PC-9 (cell line): ENCODE measurements at regions of chr12 and their contacts with region 1.

Region 1: DNA sequence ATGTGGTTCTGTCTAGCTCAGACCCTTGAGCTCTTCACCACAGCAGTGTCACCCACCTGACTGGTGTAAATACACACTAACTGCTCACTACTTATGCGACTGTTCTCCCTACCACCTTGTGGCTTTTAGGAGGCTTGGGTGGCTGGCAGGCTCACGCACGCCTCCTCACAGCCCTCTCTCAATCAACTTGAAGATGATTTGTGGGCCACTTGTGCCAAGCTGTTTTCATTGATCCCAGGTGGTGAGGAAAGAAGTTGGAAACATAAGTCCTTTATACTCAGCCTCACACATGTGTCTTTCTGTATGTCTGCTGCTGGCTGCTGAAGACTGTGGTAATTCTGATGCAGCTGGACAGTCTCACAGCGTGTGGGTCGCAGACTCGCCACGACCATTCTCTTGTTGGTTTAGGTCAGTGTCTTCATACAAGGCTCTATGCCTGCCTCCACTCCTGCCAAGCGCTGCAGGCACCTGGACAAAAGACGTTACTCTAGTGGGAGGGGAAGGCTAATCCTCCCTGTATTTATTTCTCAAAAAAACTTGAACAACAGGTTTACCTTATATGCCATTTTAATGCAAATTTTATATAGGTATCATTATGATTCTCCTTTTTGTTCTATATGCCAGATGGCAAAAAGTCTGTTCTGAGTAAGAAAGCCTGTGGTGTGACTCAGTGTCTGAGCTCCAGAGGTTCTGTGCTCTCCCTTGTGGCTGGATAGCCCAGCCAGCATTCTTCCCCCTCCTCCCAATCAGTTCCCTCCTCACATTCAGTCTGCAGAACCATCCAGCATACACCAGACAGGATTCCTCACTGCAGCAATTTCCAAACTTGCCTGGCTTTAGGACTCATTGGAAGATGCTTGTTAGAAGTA is 115.6 kb downstream of the DIP2B start:
- DNase-seq: peak; percentile 51 to 68
- H3K4me3 ChIP-seq: no peak overlapping the region
- H3K27ac ChIP-seq: peak overlapping the region; percentile 93
- H3K4me1 ChIP-seq: peaks cover 66% of the 10 kb centered on the region
- H3K27me3 ChIP-seq: no peaks in the 10 kb centered on the region
- CTCF ChIP-seq: no peak

Region 2: DNA sequence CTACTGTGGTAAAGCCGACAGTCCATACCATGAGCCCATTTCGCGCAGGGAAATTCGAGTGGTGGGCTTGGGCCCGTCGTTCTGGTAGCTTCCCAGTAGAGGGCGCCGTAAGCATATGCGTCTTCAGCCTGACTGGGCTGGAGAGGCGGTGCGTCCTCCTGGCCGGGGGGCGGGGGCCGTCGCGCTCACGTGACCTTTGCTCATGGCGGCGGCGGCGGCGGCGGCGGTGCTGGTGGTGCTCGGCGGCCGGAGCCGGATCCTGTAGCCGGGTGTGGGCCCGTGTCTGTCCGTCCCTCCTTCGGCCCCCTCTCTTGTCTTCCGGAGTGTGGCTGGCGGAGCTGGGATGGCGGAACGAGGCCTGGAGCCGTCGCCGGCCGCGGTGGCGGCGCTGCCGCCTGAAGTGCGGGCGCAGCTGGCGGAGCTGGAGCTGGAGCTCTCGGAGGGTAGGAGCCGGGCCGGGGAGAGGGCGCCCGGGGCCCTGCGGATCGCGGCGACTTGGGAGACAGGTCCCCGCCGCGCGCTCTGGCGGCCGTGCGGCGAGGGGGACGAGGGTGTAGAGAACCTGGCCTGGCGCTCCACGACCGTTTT is 115.5 kb before region 1 on chr12 and contains the start of gene DIP2B:
- CTCF ChIA-PET with region 1: interaction called, 4 read pairs
- POLR2A ChIA-PET with region 1: interaction called, 5 read pairs
- intact Hi-C with region 1: loop called (anchors 1 kb)
- DNase-seq: peak; percentile 71 to 93
- H3K4me3 ChIP-seq: peak within 1 kb of the TSS; percentile 96
- H3K27ac ChIP-seq: peak within 1 kb of the TSS; percentile 65
- H3K4me1 ChIP-seq: peaks cover 30% of the 10 kb centered on the region
- H3K27me3 ChIP-seq: no peaks in the 10 kb centered on the region
- CTCF ChIP-seq: peak; percentile 93
- total RNA-seq, gene DIP2B: 29.0 and 29.4 TPM in 2 replicates

Region 3: GRCh38 chr12:50533203-50533584 is 87.1 kb before region 1 on chr12:
- CTCF ChIA-PET with region 1: no interaction called
- POLR2A ChIA-PET with region 1: interaction called, 6 read pairs
- intact Hi-C with region 1: loop called (anchors 1 kb)
- DNase-seq: no peak
- H3K4me3 ChIP-seq: peak overlapping the region; percentile 30; the same call in 1 of the 2 replicates
- H3K27ac ChIP-seq: peak overlapping the region; percentile 98
- H3K4me1 ChIP-seq: peaks cover 85% of the 10 kb centered on the region
- H3K27me3 ChIP-seq: no peaks in the 10 kb centered on the region
- CTCF ChIP-seq: no peak

Region 4: DNA sequence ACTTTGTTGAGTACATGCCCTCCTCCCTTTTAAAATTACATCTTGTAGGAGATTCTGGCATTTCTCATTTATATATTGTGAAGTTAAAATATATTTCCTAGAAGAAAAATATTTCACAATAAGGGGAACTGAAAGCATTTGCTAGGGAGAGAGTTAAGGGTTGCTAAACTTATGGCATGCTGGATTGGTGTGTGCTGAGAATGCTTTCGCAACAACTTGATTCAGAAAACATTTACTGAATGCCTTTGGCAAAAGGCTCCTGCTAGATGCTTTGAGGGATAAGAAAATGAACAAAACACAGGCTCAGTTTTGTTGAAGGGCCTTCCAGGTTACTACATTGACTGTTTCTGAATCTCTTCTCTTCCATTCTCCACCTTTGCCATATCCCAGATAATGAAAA is 48.1 kb before region 1 on chr12:
- CTCF ChIA-PET with region 1: no interaction called
- POLR2A ChIA-PET with region 1: no interaction called
- intact Hi-C with region 1: loop called (anchors 5 kb)
- DNase-seq: peak; percentile 24 to 91
- H3K4me3 ChIP-seq: no peak overlapping the region
- H3K27ac ChIP-seq: peak overlapping the region; percentile 54
- H3K4me1 ChIP-seq: peaks cover 52% of the 10 kb centered on the region
- H3K27me3 ChIP-seq: no peaks in the 10 kb centered on the region
- CTCF ChIP-seq: no peak

Region 5: DNA sequence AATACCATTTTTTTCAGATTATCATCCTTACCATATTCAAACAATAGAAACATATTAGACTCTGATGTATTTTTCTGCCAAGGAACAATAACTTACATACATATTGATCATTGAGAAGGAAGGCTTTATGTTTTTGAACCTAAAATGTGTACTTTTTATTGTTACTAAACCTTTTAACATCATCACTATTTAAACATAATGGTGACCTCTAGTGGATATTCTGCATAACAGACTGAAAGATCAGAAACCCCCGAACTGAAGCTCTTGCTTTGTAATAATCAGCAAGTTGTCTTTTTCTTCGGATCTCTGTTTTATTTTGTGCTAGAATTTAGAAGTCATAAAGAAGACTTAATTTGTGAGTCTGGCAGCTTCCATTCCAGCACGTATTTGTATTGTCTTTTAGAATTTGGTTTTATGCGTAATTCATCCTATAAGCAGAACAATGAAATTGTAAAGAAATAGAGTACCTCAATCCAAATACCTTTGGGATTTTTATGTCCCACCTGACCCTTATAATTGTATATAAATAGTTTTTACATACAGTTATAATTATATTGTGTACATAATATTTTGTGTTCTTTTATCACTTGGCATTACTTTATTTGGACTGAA is 17.6 kb after region 1 on chr12:
- CTCF ChIA-PET with region 1: interaction called, 6 read pairs
- POLR2A ChIA-PET with region 1: interaction called, 5 read pairs
- intact Hi-C with region 1: loop called (anchors 2 kb)
- DNase-seq: peak in 1 of 2 experiments; percentile 59
- H3K4me3 ChIP-seq: no peak overlapping the region
- H3K27ac ChIP-seq: peak overlapping the region; percentile 45
- H3K4me1 ChIP-seq: peaks cover 43% of the 10 kb centered on the region
- H3K27me3 ChIP-seq: no peaks in the 10 kb centered on the region
- CTCF ChIP-seq: peak; percentile 78

Region 6: GRCh38 chr12:50708631-50709030 is 88.3 kb after region 1 on chr12:
- CTCF ChIA-PET with region 1: no interaction called
- POLR2A ChIA-PET with region 1: no interaction called
- intact Hi-C with region 1: no loop called
- DNase-seq: no peak
- H3K4me3 ChIP-seq: no peak overlapping the region
- H3K27ac ChIP-seq: no peak overlapping the region
- H3K4me1 ChIP-seq: no peaks in the 10 kb centered on the region
- H3K27me3 ChIP-seq: no peaks in the 10 kb centered on the region
- CTCF ChIP-seq: no peak

Region 7: GRCh38 chr12:51009056-51009440 is 388.7 kb after region 1 on chr12:
- CTCF ChIA-PET with region 1: no interaction called
- POLR2A ChIA-PET with region 1: no interaction called
- intact Hi-C with region 1: no loop called
- DNase-seq: no peak
- H3K4me3 ChIP-seq: no peak overlapping the region
- H3K27ac ChIP-seq: peak overlapping the region; percentile 9; the same call in 1 of the 2 replicates
- H3K4me1 ChIP-seq: peaks cover 22% of the 10 kb centered on the region
- H3K27me3 ChIP-seq: no peaks in the 10 kb centered on the region
- CTCF ChIP-seq: no peak